Naive thymus-derived CD4-positive, alpha-beta T cell (primary cell): ENCODE measurements at regions of chr14 and their contacts with region 1.

Region 1: DNA sequence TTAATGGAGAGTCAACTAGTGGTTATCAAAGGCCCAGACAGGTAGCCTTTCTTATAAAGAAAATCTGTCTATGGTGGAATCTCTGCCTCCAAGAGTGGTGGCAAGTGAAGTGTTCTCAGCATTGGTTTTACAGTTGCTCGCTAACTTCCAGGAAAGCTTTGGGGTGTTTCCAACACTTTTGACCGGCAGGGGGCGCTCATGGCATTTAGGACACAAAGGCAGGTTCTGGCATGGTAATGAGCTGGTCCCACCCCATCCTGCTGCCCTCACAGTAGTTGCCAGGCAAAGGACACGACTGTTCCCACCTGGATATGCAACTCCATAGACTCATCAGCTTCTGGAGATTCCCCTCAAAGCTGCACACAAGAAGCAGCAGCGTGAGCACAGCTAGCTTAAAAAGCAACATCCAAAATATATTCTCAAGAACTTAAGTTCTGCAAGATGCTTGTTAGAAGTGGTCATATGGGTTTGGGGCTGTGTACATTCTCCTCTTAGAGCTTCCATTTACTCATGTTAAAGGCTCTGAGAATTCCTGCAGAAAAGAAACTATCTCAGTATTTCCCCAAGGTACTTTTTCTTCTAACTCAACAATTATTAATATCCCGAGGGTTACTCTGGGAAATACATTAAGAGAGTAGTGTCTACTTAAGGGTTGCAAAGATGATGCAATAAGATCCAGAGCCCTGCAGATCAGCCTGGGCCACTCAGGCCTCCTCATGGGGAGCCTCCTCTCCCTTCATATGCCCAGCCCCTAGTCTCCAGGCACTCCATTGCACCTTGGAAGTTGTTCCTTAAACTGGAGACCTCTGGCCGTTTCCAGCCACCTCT is 14.8 kb downstream of the PROX2 start:
- DNase-seq: peak; percentile 76 to 93 (median 86)
- ATAC-seq: peak; percentile 90
- H3K4me3 ChIP-seq: no peak overlapping the region
- H3K4me3 Mint-ChIP-seq: no peak overlapping the region
- H3K27ac ChIP-seq: no peak overlapping the region
- H3K27ac Mint-ChIP-seq: peak overlapping the region in 3 of 9 donors; percentile 41 to 47 (median 45)
- H3K4me1 ChIP-seq: peaks cover 4 to 6% of the 10 kb centered on the region in 2 donors
- H3K4me1 Mint-ChIP-seq: peaks cover 2 to 21% (median 7%) of the 10 kb centered on the region in 7 donors
- H3K27me3 ChIP-seq: no peaks in the 10 kb centered on the region
- H3K27me3 Mint-ChIP-seq: no peaks in the 10 kb centered on the region

Region 2: DNA sequence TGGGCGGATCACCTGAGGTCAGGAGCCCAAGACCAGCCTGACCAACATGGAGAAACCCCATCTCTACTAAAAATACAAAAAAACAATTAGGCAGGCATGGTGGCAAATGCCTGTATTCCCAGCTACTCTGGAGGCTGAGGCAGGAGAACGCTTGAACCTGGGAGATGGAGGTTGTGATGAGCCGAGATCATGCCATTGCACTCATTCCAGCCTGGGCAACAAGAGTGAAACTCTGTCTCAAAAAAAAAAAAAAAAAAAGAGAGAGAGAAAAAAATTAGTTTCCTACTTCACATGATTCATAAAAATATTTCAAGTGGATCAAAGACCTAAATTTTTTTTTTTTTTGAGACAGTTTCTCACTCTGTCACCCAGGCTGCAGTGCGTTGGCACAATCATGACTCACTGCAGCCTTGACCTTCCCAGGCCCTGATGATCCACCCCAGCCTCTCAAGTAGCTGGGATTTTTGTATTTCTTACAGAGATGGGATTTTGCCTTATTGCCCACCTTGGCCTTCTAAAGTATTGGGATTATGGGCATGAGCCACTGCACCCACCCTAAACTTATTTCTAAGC is 123.3 kb before region 1 on chr14:
- CTCF ChIA-PET with region 1: no interaction called
- POLR2A ChIA-PET with region 1: no interaction called
- intact Hi-C with region 1: no loop called
- DNase-seq: no peak
- ATAC-seq: no peak
- H3K4me3 ChIP-seq: no peak overlapping the region
- H3K4me3 Mint-ChIP-seq: no peak overlapping the region
- H3K27ac ChIP-seq: no peak overlapping the region
- H3K27ac Mint-ChIP-seq: no peak overlapping the region
- H3K4me1 ChIP-seq: no peaks in the 10 kb centered on the region
- H3K4me1 Mint-ChIP-seq: peaks cover 0 to 4% (median 0%) of the 10 kb centered on the region in 7 donors
- H3K27me3 ChIP-seq: no peaks in the 10 kb centered on the region
- H3K27me3 Mint-ChIP-seq: no peaks in the 10 kb centered on the region

Region 3: DNA sequence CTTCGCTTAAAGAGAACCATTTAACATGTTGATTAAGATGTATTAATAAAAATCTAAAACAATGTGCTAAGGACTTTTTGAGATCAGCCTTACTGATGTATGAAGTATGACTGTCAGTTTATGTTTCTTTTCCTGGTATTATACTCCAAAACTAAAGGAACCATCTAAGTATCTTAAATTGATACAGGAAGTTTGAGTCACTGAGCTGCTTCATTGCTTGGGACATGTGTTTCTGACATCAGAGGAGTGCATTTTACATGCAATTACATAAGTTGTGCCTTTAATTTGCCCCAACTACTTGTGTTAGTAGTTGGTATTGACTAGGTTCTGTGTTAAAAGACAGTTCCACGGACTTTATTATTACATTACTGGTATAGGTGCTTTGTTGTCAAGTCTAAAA is 36.1 kb before region 1 on chr14:
- CTCF ChIA-PET with region 1: interaction called, 11 read pairs
- POLR2A ChIA-PET with region 1: no interaction called
- intact Hi-C with region 1: no loop called
- DNase-seq: no peak
- ATAC-seq: no peak
- H3K4me3 ChIP-seq: no peak overlapping the region
- H3K4me3 Mint-ChIP-seq: no peak overlapping the region
- H3K27ac ChIP-seq: no peak overlapping the region
- H3K27ac Mint-ChIP-seq: peak overlapping the region in 1 of 9 donors; percentile 18
- H3K4me1 ChIP-seq: no peaks in the 10 kb centered on the region
- H3K4me1 Mint-ChIP-seq: peaks cover 0 to 11% (median 5%) of the 10 kb centered on the region in 7 donors
- H3K27me3 ChIP-seq: no peaks in the 10 kb centered on the region
- H3K27me3 Mint-ChIP-seq: no peaks in the 10 kb centered on the region

Region 4: GRCh38 chr14:74881431-74882361 is 20.6 kb after region 1 on chr14 and contains the start of gene DLST:
- CTCF ChIA-PET with region 1: interaction called, 68 read pairs
- POLR2A ChIA-PET with region 1: interaction called, 6 read pairs
- intact Hi-C with region 1: loop called (anchors 1 kb)
- DNase-seq: peak; percentile 74 to 94 (median 81)
- ATAC-seq: peak; percentile 91
- H3K4me3 ChIP-seq: peak within 1 kb of the TSS; percentile 77
- H3K4me3 Mint-ChIP-seq: peak within 1 kb of the TSS; percentile 94 to 100 (median 98)
- H3K27ac ChIP-seq: peak within 1 kb of the TSS; percentile 91
- H3K27ac Mint-ChIP-seq: peak within 1 kb of the TSS; percentile 96 to 100 (median 99)
- H3K4me1 ChIP-seq: peaks cover 30 to 34% of the 10 kb centered on the region in 2 donors
- H3K4me1 Mint-ChIP-seq: peaks cover 49 to 82% (median 72%) of the 10 kb centered on the region in 7 donors
- H3K27me3 ChIP-seq: no peaks in the 10 kb centered on the region
- H3K27me3 Mint-ChIP-seq: no peaks in the 10 kb centered on the region
- total RNA-seq, gene DLST: 90.0 to 132 (median 96.5) TPM

Region 5: DNA sequence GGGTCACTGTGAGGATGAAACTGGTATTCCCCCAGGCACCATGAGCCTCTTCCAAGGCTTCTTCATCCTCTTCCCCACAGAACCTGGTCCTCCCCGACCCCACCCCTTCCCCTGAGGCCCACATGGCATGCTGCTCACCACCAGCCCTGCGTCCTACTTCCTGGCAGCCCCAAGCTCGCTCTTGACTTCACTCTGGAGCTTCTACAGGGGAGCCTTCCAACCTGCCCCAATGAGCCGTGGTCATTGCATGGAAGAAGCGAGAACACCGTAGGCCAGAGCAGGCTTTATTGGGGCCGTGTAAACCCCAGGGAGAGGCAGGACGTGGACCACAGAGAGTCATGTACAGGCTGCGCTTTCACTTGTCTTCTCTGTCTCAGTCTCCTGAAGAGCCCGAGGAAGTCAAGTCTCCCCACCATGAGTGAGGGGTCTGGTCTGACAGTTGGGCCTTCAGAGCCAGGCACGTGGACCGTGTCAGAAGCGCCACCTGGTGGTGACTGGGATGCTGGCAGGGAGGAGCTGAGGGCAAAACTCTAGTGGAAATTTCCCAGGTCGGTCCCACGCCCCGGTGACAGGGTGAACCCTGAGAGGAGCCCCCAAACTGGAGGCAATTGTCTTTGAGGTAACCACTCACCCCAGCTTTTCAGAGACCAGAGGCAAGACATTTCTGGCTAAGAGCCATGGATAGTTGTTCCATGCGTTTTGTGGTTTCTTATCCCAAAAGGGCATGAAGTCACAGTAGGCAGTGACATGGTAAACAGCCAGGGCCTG is 44.4 kb after region 1 on chr14:
- CTCF ChIA-PET with region 1: interaction called, 317 read pairs
- POLR2A ChIA-PET with region 1: interaction called, 39 read pairs
- intact Hi-C with region 1: loop called (anchors 1 kb)
- DNase-seq: peak; percentile 56 to 83 (median 71)
- ATAC-seq: peak; percentile 76
- H3K4me3 ChIP-seq: no peak overlapping the region
- H3K4me3 Mint-ChIP-seq: no peak overlapping the region
- H3K27ac ChIP-seq: peak overlapping the region; percentile 38
- H3K27ac Mint-ChIP-seq: peak overlapping the region in 5 of 9 donors; percentile 48 to 81 (median 77)
- H3K4me1 ChIP-seq: peaks cover 0 to 6% of the 10 kb centered on the region in 2 donors
- H3K4me1 Mint-ChIP-seq: peaks cover 0 to 23% (median 4%) of the 10 kb centered on the region in 7 donors
- H3K27me3 ChIP-seq: no peaks in the 10 kb centered on the region
- H3K27me3 Mint-ChIP-seq: no peaks in the 10 kb centered on the region

Region 6: DNA sequence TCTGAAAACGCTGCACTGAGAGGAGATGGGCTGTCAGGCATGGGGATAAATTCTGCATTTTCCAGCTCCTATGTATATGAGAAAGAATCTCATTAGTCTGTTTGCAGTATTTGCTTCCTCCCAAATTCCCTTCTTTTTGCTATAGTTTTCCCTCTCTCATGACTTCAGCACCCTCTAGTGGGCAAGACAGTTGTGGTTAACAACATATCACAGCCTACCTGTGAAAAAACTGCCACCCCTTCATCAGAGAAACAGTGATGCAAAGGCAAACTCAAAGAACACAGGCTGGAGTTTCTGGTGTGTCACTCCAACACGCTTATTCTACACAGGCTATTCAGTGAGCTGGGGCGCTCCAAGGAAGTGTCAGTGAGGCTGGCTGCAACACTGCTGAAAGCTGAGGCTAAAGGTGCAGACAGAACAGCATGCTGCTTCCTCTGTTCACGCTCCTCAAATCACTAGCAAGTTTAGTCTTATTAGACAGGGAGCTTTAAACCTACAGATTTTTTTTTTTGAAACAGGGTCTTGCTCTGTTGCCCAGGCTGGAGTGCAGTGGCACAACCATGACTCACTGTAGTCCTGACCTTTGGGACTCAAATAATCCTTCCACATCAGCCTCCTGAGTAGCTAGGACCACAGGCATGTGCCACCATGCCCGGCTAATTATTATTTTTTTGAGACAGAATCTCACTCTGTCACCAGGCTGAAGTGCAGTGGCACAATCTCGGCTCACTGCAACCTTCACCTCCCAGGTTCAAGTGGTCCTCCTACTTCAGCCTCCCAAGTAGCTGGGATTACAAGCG is 227.7 kb after region 1 on chr14:
- CTCF ChIA-PET with region 1: interaction called, 78 read pairs
- POLR2A ChIA-PET with region 1: no interaction called
- intact Hi-C with region 1: loop called (anchors 1 kb)
- DNase-seq: peak in 7 of 9 donors; percentile 27 to 55 (median 47)
- ATAC-seq: peak; percentile 67
- H3K4me3 ChIP-seq: no peak overlapping the region
- H3K4me3 Mint-ChIP-seq: no peak overlapping the region
- H3K27ac ChIP-seq: no peak overlapping the region
- H3K27ac Mint-ChIP-seq: peak overlapping the region in 1 of 9 donors; percentile 40
- H3K4me1 ChIP-seq: no peaks in the 10 kb centered on the region
- H3K4me1 Mint-ChIP-seq: no peaks in the 10 kb centered on the region
- H3K27me3 ChIP-seq: no peaks in the 10 kb centered on the region
- H3K27me3 Mint-ChIP-seq: no peaks in the 10 kb centered on the region